Aorta (tissue), 5 donors: ENCODE measurements at regions of chr6 and their contacts with region 1.

Region 1: GRCh38 chr6:25889877-25890853 is 16.1 kb upstream of the SLC17A3 start:
- DNase-seq: no peak
- ATAC-seq: peak; percentile 65
- H3K4me3 ChIP-seq: no peak overlapping the region
- H3K27ac ChIP-seq: no peak overlapping the region
- H3K4me1 ChIP-seq: no peaks in the 10 kb centered on the region
- H3K27me3 ChIP-seq: no peaks in the 10 kb centered on the region

Region 2: GRCh38 chr6:25576919-25577318 is 313.2 kb before region 1 on chr6:
- intact Hi-C with region 1: no loop called
- DNase-seq: no peak
- ATAC-seq: no peak
- H3K4me3 ChIP-seq: no peak overlapping the region
- H3K27ac ChIP-seq: no peak overlapping the region
- H3K4me1 ChIP-seq: no peaks in the 10 kb centered on the region
- H3K27me3 ChIP-seq: no peaks in the 10 kb centered on the region

Region 3: GRCh38 chr6:25717866-25718740 is 172.1 kb before region 1 on chr6:
- intact Hi-C with region 1: loop called (anchors 10 kb)
- DNase-seq: no peak
- ATAC-seq: no peak
- H3K4me3 ChIP-seq: no peak overlapping the region
- H3K27ac ChIP-seq: no peak overlapping the region
- H3K4me1 ChIP-seq: no peaks in the 10 kb centered on the region
- H3K27me3 ChIP-seq: no peaks in the 10 kb centered on the region

Region 4: GRCh38 chr6:25726122-25726911 is 163.8 kb before region 1 on chr6:
- intact Hi-C with region 1: loop called in 1 of 2 experiments (anchors 10 kb)
- DNase-seq: no peak
- ATAC-seq: no peak
- H3K4me3 ChIP-seq: no peak overlapping the region
- H3K27ac ChIP-seq: no peak overlapping the region
- H3K4me1 ChIP-seq: no peaks in the 10 kb centered on the region
- H3K27me3 ChIP-seq: no peaks in the 10 kb centered on the region

Region 5: GRCh38 chr6:25801436-25801835 is 88.7 kb before region 1 on chr6:
- intact Hi-C with region 1: no loop called
- DNase-seq: no peak
- ATAC-seq: no peak
- H3K4me3 ChIP-seq: no peak overlapping the region
- H3K27ac ChIP-seq: no peak overlapping the region
- H3K4me1 ChIP-seq: no peaks in the 10 kb centered on the region
- H3K27me3 ChIP-seq: peaks cover 0 to 2% of the 10 kb centered on the region in 2 donors